Left ventricle myocardium inferior (tissue), 1 donor: ENCODE measurements at regions of chr18 and their contacts with region 1.

Region 1: GRCh38 chr18:63119647-63120046 is 199.9 kb downstream of the BCL2 start:
- DNase-seq: no peak
- H3K4me3 ChIP-seq: no peak overlapping the region
- H3K27ac ChIP-seq: no peak overlapping the region
- H3K4me1 ChIP-seq: peaks cover 11% of the 10 kb centered on the region
- H3K27me3 ChIP-seq: no peaks in the 10 kb centered on the region
- CTCF ChIP-seq: peak; percentile 63

Region 2: GRCh38 chr18:63177919-63178821 is 58.5 kb after region 1 on chr18:
- intact Hi-C with region 1: loop called (anchors 10 kb)
- DNase-seq: peak; percentile 79
- H3K4me3 ChIP-seq: peak overlapping the region; percentile 36
- H3K27ac ChIP-seq: peak overlapping the region; percentile 74
- H3K4me1 ChIP-seq: peaks cover 51% of the 10 kb centered on the region
- H3K27me3 ChIP-seq: no peaks in the 10 kb centered on the region
- CTCF ChIP-seq: no peak

Region 3: DNA sequence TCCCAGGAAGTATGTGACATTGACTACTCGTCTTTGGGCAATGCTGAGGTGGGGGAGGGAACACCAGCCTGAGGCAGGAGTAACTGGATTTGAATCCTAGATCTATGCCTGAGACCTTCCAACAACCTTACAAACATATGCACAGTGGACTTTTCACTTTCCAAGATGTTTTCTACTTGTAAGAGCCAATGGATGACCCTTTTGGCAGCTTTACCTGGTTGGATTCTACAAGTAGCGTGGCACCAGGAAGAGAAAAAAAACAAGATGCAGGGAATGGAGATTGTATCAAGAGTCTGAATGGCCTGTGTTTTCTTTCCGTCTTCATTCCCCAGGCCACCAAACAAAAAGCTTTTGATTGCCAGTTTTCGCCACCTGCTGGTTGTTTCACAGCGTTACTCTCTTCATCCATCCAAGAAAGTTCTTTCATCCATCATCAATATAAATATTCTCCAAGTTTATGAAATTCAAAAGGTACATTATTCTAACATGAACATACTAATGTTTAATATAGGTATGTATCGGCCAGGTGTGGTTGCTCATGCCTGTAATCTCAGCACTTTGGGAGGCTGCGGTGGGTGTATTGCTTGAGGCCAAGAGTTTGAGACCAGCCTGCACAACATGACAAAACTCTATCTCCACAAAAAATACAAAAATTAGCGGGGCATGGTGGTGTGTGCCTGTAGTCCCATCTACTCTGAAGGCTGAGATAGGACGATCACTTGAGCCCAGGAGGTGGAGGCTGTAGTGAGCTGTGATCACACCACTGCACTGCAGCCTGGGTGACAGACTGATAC is 203.4 kb after region 1 on chr18:
- intact Hi-C with region 1: no loop called
- DNase-seq: no peak
- H3K4me3 ChIP-seq: no peak overlapping the region
- H3K27ac ChIP-seq: peak overlapping the region; percentile 49
- H3K4me1 ChIP-seq: peaks cover 33% of the 10 kb centered on the region
- H3K27me3 ChIP-seq: no peaks in the 10 kb centered on the region
- CTCF ChIP-seq: peak; percentile 87